WTC11 (cell line): ENCODE measurements at regions of chr7 and their contacts with region 1.

Region 1: GRCh38 chr7:128946923-128947830 is 9.4 kb downstream of the IRF5 start:
- DNase-seq: peak; percentile 65
- ATAC-seq: peak; percentile 82
- H3K4me3 Mint-ChIP-seq: no peak overlapping the region
- H3K27ac Mint-ChIP-seq: no peak overlapping the region
- H3K4me1 Mint-ChIP-seq: no peaks in the 10 kb centered on the region
- H3K27me3 Mint-ChIP-seq: no peaks in the 10 kb centered on the region; the same call in 1 of the 2 replicates
- CTCF ChIP-seq: 0 out of 2 replicates have a peak, but pooled peaks have one; percentile 15

Region 2: DNA sequence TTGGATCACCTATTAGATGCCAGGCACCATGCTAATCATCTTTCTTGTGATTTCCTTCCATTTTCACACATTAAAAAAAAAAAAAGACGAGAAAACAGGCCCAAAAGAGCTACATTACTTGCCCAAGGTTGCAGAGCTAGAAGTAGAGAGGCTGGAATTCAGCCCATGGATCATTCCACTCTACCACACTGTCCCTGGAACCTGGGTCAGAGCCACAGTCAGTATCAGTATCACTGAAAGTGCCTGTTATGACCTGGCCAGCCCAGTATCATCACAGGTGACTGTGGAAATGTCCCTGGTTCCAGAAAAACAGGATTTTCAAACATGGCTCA is 120.3 kb before region 1 on chr7:
- CTCF ChIA-PET with region 1: no interaction called
- POLR2A ChIA-PET with region 1: no interaction called
- DNase-seq: no peak
- ATAC-seq: no peak
- H3K4me3 Mint-ChIP-seq: no peak overlapping the region
- H3K27ac Mint-ChIP-seq: peak overlapping the region; percentile 57
- H3K4me1 Mint-ChIP-seq: peaks cover 19% of the 10 kb centered on the region
- H3K27me3 Mint-ChIP-seq: peaks cover 31% of the 10 kb centered on the region
- CTCF ChIP-seq: no peak

Region 3: DNA sequence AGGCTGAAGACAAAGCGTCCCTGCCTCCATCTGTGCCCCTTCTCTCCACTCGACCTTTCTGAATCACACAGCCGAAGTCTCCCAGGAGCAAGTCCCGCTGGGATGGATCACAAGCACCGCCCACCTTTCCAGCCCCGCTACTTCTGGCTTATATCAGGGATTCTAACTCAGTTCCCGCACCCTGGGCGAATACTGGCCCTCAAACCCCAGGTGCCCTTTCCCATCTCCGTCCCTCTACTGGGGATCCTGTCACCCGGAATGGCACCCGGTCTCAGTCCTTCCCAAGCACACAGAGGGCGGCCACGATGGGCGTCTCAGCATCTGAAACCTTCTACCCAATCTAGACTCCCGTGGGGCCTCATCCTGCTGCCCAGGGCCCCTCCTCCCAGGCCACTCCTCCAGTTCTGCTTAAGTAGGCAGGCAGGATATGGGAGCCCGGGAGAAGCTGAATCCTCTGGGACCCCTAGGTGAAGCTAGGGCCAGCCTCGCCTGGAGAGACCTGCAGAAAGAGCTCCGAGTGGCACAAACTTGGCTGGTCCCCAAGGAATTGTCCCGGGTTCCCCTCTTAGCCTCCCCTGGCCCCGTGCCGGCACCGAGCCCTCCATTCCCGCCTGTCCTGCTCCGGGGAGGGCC is 37.4 kb before region 1 on chr7:
- CTCF ChIA-PET with region 1: interaction called, 64 read pairs
- POLR2A ChIA-PET with region 1: no interaction called
- DNase-seq: peak; percentile 52
- ATAC-seq: peak; percentile 41
- H3K4me3 Mint-ChIP-seq: peak overlapping the region; percentile 72
- H3K27ac Mint-ChIP-seq: no peak overlapping the region
- H3K4me1 Mint-ChIP-seq: peaks cover 28% of the 10 kb centered on the region
- H3K27me3 Mint-ChIP-seq: peaks cover 62% of the 10 kb centered on the region
- CTCF ChIP-seq: no peak

Region 4: DNA sequence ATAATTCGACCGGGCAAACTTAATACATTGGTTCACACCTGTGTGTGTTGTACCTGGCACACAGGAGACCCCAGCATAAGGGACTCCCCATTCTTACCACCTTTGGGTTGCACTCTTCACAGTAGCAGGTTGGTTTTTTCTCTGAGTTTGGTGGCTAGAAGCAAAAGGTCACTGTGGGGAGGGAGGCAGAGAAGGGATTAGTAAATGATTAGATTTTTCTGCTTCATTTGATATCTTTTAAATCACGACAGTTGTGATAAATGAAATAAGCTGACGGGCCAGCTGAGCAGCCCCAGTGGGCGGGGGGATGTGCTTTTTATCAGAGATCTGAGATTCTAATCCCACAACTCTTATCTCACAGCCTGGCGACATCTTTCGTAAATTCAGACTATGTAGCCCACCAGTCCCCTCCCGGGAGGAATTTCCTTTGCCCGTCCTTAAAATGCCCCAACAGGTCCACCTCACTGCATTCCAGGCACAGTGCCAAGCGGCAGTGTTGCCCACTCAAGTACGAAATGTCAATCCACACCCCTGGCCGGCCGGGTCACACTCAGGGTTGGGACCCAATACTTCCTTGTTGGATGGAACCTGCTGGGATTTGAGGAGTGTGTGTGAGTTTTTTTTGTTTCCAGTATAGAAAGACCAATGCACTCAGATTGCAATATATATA is 26.1 kb before region 1 on chr7:
- CTCF ChIA-PET with region 1: interaction called, 15 read pairs
- POLR2A ChIA-PET with region 1: no interaction called
- DNase-seq: no peak
- ATAC-seq: no peak
- H3K4me3 Mint-ChIP-seq: no peak overlapping the region
- H3K27ac Mint-ChIP-seq: no peak overlapping the region
- H3K4me1 Mint-ChIP-seq: peaks cover 12% of the 10 kb centered on the region
- H3K27me3 Mint-ChIP-seq: peaks cover 41% of the 10 kb centered on the region
- CTCF ChIP-seq: no peak

Region 5: DNA sequence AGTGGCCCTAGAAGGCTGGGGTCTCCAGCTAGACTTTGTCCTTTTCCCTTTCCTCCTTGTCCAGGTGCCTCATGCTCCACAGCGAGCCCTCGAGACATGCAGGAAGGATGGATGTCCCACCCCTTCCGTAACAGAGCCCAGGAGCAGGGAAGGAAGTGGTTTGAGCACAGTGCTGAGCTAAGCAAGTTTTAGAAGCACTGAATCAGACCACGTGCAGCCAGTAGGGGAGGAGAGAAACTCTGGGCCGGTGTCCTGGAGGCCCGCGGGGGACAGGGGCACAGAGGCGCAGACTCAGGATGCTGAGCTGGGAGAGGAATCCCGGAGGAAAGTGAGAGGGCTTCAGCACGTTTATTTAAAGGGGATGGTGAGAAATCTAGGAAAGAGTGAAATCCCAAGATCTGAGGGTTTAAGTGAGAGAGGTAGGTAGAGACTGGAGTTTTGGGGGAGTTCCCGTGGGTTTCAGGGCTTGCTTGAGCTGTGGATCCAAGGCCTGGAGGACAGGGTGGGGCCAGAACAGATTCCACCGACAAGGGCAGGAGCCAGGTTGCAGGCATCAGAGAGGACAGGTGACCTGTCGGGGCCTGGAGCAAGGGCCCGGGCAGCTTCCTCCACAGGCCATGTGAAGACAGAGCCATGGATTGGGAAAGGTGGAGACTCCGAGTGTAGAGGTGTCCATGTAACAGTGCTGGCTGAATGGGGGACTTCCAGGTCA is 13.8 kb before region 1 on chr7:
- CTCF ChIA-PET with region 1: interaction called, 29 read pairs
- POLR2A ChIA-PET with region 1: no interaction called
- DNase-seq: no peak
- ATAC-seq: peak; percentile 40
- H3K4me3 Mint-ChIP-seq: no peak overlapping the region
- H3K27ac Mint-ChIP-seq: no peak overlapping the region
- H3K4me1 Mint-ChIP-seq: peaks cover 8% of the 10 kb centered on the region
- H3K27me3 Mint-ChIP-seq: peaks cover 44% of the 10 kb centered on the region
- CTCF ChIP-seq: no peak

Region 6: DNA sequence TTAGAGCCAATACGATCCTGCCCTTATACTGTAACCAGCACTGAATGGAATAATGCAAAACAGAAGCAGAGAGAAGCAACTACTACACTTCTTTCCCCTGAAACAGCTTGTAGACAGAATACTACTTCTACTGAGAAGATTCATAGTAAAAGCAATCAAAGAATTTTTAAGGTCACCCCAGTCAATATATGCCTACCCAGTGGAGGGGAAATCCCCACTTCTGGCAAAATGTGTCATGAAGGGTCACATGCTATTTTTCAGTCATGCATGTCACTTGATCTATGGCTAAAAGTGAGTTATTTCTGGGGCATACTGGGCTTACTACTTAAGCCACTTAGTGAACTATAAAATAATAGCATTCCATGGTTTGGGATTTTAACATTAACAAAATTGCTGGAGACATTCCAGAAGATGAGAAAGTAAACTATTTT is 16.2 kb after region 1 on chr7:
- CTCF ChIA-PET with region 1: interaction called, 10 read pairs
- POLR2A ChIA-PET with region 1: no interaction called
- DNase-seq: no peak
- ATAC-seq: no peak
- H3K4me3 Mint-ChIP-seq: no peak overlapping the region
- H3K27ac Mint-ChIP-seq: no peak overlapping the region
- H3K4me1 Mint-ChIP-seq: peaks cover 15% of the 10 kb centered on the region
- H3K27me3 Mint-ChIP-seq: no peaks in the 10 kb centered on the region
- CTCF ChIP-seq: no peak